ENCODE measurements at regions of chr1 and their contacts with region 1.

Region 1: DNA sequence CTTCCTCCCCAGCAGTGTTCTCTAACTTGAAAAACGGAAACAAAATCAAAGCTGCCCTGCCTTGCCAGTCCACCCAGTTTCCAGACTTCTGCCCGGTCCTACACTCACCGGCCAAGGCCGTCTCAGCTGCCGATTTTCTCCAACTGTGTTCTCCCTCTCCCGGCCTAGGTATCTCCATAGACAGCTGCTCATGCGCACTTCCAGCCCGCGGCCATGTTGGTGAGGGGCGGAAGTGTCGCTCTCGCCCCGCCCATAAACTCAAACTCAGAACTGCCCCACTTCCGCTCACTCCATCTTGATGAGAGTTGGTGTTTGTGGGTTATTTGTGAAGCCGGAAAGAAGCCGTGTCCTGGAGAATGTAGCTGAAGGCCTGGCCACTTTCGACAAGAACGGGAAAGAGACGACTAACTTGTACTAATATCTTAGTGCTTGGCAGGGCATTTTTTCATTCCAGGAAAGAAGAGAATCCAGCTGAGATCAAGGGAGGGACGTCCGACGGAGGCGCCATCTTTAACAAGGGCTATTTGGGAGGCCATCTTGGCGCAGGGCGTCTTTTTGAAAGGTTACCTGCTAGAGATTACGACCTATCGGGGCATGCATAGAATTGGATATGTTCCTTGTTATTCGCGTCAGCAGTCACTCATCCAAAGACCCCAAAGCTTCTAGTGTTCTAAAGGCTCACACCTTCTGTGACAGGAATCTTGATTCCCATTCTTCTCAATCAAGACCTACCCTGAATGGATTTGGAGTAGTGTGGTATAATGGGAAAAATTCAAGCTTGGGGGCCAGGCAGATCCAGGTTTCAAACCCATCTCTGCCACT is at the start of gene USF1:
- DNase-seq: peak; percentile 92
- ATAC-seq: peak; percentile 85
- H3K4me3 ChIP-seq: peak within 1 kb of the TSS; percentile 78 to 84 (median 79)
- H3K27ac ChIP-seq: peak within 1 kb of the TSS; percentile 94
- H3K4me1 ChIP-seq: peaks cover 20% of the 10 kb centered on the region
- H3K27me3 ChIP-seq: no peaks in the 10 kb centered on the region; a peak in 2 of 5 replicates
- CTCF ChIP-seq: peak; percentile 14; the same call in 1 of the 2 replicates
- EP300 ChIP-seq: peak in 1 of 2 experiments; percentile 11; a peak in 1 of 4 replicates
- POLR2A ChIP-seq: peak; percentile 77 to 86
- RAD21 ChIP-seq: no peak
- total RNA-seq, gene USF1: 32.2 and 39.4 TPM in 2 replicates

Region 2: DNA sequence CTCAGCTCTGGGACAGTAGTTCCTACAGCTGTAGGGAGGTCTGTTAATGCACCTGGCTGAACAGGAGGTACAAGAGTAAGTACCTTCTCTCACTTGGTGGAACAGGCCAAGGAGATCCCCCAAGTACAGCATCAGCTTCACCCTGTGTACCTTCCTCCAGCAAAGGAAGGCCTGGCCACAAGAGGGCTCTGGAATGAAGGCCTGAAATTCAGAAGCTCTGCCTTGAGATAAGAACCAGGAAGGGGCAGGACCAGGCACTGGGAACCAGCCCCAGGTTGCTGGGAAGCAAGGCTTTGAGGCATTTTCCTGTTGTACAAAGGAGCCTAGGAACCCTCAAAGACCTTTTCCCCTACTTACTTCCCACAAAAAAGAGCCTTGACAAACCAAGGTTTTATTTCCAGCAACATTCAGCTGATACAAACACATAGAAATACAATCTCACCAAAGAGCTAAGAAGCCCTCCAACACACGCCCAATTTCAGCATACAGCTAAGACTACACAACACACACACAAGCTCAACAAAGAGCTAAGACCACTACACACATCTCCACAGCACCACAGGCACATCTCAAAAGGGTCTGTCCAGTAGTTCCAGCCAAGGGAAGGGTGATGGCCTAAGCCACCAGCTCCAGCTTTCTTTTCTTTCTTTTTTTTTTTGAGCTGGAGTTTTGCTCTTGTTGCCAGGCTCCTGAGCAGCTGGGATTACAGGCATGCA is 48.5 kb before region 1 on chr1:
- CTCF ChIA-PET with region 1: interaction called, 3 read pairs
- POLR2A ChIA-PET with region 1: interaction called, 7 read pairs
- in situ Hi-C with region 1: no loop called
- intact Hi-C with region 1: loop called (anchors 2 kb)
- DNase-seq: peak; percentile 61
- ATAC-seq: peak; percentile 95
- H3K4me3 ChIP-seq: no peak overlapping the region
- H3K27ac ChIP-seq: no peak overlapping the region
- H3K4me1 ChIP-seq: peaks cover 11% of the 10 kb centered on the region
- H3K27me3 ChIP-seq: no peaks in the 10 kb centered on the region
- CTCF ChIP-seq: peak; percentile 84
- EP300 ChIP-seq: no peak
- POLR2A ChIP-seq: no peak
- RAD21 ChIP-seq: peak; percentile 49; the same call in 1 of the 2 replicates

Region 3: DNA sequence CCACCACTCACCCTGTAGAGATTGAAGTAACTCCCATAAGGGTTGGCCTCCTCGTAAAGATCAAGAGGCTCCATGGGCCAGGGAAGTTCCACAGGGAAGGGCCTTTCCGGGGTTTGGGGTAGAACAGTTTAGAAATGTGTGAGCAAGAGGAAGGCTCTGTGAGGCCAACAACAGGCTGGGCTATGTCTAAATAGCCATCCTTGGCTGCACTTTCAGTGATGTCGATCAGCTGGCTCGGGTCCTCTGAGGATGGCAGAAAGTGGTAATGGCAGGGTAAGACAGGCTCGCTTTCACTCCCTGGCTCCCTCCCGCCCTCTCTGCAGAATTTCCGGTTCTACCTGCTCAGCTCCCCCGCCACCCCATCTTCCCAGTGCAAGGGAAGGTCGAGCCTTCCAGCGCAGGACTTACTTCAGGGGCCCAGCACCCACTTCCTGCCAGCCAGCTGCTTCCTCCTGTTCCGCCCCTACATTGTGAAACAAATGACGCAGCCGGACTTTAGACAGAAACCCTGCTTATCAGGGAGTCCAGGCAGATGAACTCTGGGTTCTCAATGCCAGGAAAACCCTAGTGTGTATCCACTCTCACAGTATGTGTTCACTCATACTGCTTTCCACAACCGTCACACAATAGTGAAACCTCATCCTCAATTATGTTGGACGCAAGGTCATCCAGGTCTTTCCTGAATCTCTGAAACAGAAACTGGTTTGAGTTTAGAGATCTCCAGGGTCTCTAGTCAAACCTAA is 32.3 kb before region 1 on chr1:
- CTCF ChIA-PET with region 1: no interaction called
- POLR2A ChIA-PET with region 1: interaction called, 38 read pairs
- in situ Hi-C with region 1: no loop called
- intact Hi-C with region 1: no loop called
- DNase-seq: peak; percentile 99
- ATAC-seq: peak; percentile 95
- H3K4me3 ChIP-seq: peak overlapping the region; percentile 44 to 65 (median 51)
- H3K27ac ChIP-seq: peak overlapping the region; percentile 91
- H3K4me1 ChIP-seq: peaks cover 57% of the 10 kb centered on the region
- H3K27me3 ChIP-seq: no peaks in the 10 kb centered on the region
- CTCF ChIP-seq: peak; percentile 21
- EP300 ChIP-seq: peak; percentile 40 to 89; a peak in 2 of 4 replicates
- POLR2A ChIP-seq: peak; percentile 27 to 70; a peak in 3 of 4 replicates
- RAD21 ChIP-seq: no peak; the same call in 1 of the 2 replicates

Region 4: GRCh38 chr1:161021165-161021960 is 24.6 kb before region 1 on chr1:
- CTCF ChIA-PET with region 1: no interaction called
- POLR2A ChIA-PET with region 1: interaction called, 60 read pairs
- in situ Hi-C with region 1: no loop called
- intact Hi-C with region 1: no loop called
- DNase-seq: peak; percentile 88
- ATAC-seq: peak; percentile 91
- H3K4me3 ChIP-seq: peak overlapping the region; percentile 64 to 87 (median 84)
- H3K27ac ChIP-seq: peak overlapping the region; percentile 75
- H3K4me1 ChIP-seq: peaks cover 51% of the 10 kb centered on the region
- H3K27me3 ChIP-seq: no peaks in the 10 kb centered on the region; a peak in 1 of 5 replicates
- CTCF ChIP-seq: no peak
- EP300 ChIP-seq: no peak
- POLR2A ChIP-seq: peak; percentile 54 to 79
- RAD21 ChIP-seq: no peak

Region 5: GRCh38 chr1:161071886-161072371 is 26.0 kb after region 1 on chr1:
- CTCF ChIA-PET with region 1: no interaction called
- POLR2A ChIA-PET with region 1: interaction called, 21 read pairs
- in situ Hi-C with region 1: no loop called
- intact Hi-C with region 1: no loop called
- DNase-seq: peak; percentile 68
- ATAC-seq: peak; percentile 72
- H3K4me3 ChIP-seq: no peak overlapping the region
- H3K27ac ChIP-seq: peak overlapping the region; percentile 12
- H3K4me1 ChIP-seq: peaks cover 35% of the 10 kb centered on the region
- H3K27me3 ChIP-seq: no peaks in the 10 kb centered on the region
- CTCF ChIP-seq: peak; percentile 80
- EP300 ChIP-seq: no peak
- POLR2A ChIP-seq: no peak
- RAD21 ChIP-seq: peak; percentile 67

Region 6: GRCh38 chr1:161117759-161118581 is 72.0 kb after region 1 on chr1 and contains the starts of genes NIT1 and PFDN2:
- CTCF ChIA-PET with region 1: no interaction called
- POLR2A ChIA-PET with region 1: interaction called, 19 read pairs
- in situ Hi-C with region 1: no loop called
- intact Hi-C with region 1: no loop called
- DNase-seq: peak; percentile 77
- ATAC-seq: peak; percentile 92
- H3K4me3 ChIP-seq: peak within 1 kb of the TSS; percentile 95 to 99 (median 96)
- H3K27ac ChIP-seq: peak within 1 kb of the TSS; percentile 88
- H3K4me1 ChIP-seq: peaks cover 58% of the 10 kb centered on the region
- H3K27me3 ChIP-seq: no peaks in the 10 kb centered on the region; a peak in 1 of 5 replicates
- CTCF ChIP-seq: no peak
- EP300 ChIP-seq: no peak
- POLR2A ChIP-seq: peak; percentile 62 to 88
- RAD21 ChIP-seq: peak; percentile 26; the same call in 1 of the 2 replicates
- total RNA-seq, gene NIT1: 30.0 and 31.0 TPM in 2 replicates
- total RNA-seq, gene PFDN2: 63.6 and 90.3 TPM in 2 replicates

Region 7: GRCh38 chr1:161314201-161314981 is 268.4 kb after region 1 on chr1 and contains the start of gene SDHC:
- CTCF ChIA-PET with region 1: no interaction called
- POLR2A ChIA-PET with region 1: no interaction called
- in situ Hi-C with region 1: no loop called
- intact Hi-C with region 1: no loop called
- DNase-seq: peak; percentile 87
- ATAC-seq: peak; percentile 94
- H3K4me3 ChIP-seq: peak within 1 kb of the TSS; percentile 78 to 92 (median 79)
- H3K27ac ChIP-seq: peak within 1 kb of the TSS; percentile 95
- H3K4me1 ChIP-seq: peaks cover 76% of the 10 kb centered on the region
- H3K27me3 ChIP-seq: no peaks in the 10 kb centered on the region; a peak in 1 of 5 replicates
- CTCF ChIP-seq: peak; percentile 73
- EP300 ChIP-seq: no peak
- POLR2A ChIP-seq: peak; percentile 92 to 96
- RAD21 ChIP-seq: no peak
- total RNA-seq, gene SDHC: 27.1 and 85.0 TPM in 2 replicates